Left cardiac atrium (tissue), 4 donors: ENCODE measurements at regions of chr4 and their contacts with region 1.

Region 1: DNA sequence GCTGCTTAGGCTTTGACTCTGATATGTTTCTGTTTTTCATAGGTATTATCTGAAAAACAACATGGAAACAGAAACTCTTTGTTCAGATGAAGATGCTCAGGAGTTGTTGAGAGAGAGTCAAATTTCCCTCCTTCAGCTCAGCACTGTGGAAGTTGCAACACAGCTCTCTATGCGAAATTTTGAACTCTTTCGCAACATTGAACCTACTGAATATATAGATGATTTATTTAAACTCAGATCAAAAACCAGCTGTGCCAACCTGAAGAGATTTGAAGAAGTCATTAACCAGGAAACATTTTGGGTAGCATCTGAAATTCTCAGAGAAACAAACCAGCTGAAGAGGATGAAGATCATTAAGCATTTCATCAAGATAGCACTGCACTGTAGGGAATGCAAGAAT is 238.6 kb downstream of the RAPGEF2 start:
- DNase-seq: no peak
- ATAC-seq: no peak

Region 2: GRCh38 chr4:159212675-159213293 is 128.7 kb before region 1 on chr4:
- intact Hi-C with region 1: loop called in 1 of 2 experiments (anchors 10 kb)
- DNase-seq: no peak
- ATAC-seq: peak; percentile 79 to 85